Activated B cell treated with CpG ODN at 0.5 μM for 24 hours (primary cell): ENCODE measurements at regions of chr13 and their contacts with region 1.

Region 1: GRCh38 chr13:31909864-31910551 is 121.6 kb upstream of the FRY start:
- DNase-seq: no peak
- ATAC-seq: peak; percentile 45
- H3K4me3 Mint-ChIP-seq: no peak overlapping the region
- H3K27ac Mint-ChIP-seq: no peak overlapping the region
- H3K4me1 Mint-ChIP-seq: peaks cover 14% of the 10 kb centered on the region
- H3K27me3 Mint-ChIP-seq: peaks cover 4% of the 10 kb centered on the region
- CTCF ChIP-seq: peak; percentile 96

Region 2: DNA sequence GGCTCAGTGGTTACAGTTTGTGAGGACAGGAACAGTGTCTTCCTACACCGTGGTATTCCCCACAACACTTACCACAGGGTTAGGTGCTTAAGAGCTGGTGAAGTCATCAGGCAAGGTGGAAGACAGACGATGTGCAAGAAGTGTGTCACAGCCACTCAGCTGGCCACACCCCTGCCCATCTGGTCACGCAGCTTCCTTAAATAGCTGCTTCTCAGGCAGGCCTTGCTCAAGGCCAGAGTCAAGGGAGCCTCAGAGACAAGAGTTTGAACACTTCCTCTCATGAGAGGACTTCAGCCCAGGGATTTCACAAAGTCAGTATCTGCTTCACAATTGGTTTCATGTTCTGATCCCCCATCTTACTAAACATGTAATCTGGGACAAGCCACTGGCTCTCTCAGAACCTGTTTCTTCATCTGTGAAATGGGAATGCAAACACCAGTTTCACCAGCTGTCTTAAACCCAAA is 41.2 kb after region 1 on chr13:
- CTCF ChIA-PET with region 1: interaction called, 6 read pairs
- POLR2A ChIA-PET with region 1: no interaction called
- intact Hi-C with region 1: loop called (anchors 1 kb)
- DNase-seq: peak; percentile 34
- ATAC-seq: peak; percentile 87
- H3K4me3 Mint-ChIP-seq: no peak overlapping the region
- H3K27ac Mint-ChIP-seq: peak overlapping the region; percentile 86
- H3K4me1 Mint-ChIP-seq: peaks cover 21% of the 10 kb centered on the region
- H3K27me3 Mint-ChIP-seq: no peaks in the 10 kb centered on the region
- CTCF ChIP-seq: no peak

Region 3: GRCh38 chr13:32019612-32020233 is 109.7 kb after region 1 on chr13:
- CTCF ChIA-PET with region 1: interaction called, 12 read pairs
- POLR2A ChIA-PET with region 1: no interaction called
- intact Hi-C with region 1: loop called (anchors 1 kb)
- DNase-seq: no peak
- ATAC-seq: peak; percentile 85
- H3K4me3 Mint-ChIP-seq: no peak overlapping the region
- H3K27ac Mint-ChIP-seq: no peak overlapping the region
- H3K4me1 Mint-ChIP-seq: no peaks in the 10 kb centered on the region
- H3K27me3 Mint-ChIP-seq: no peaks in the 10 kb centered on the region
- CTCF ChIP-seq: no peak

Region 4: DNA sequence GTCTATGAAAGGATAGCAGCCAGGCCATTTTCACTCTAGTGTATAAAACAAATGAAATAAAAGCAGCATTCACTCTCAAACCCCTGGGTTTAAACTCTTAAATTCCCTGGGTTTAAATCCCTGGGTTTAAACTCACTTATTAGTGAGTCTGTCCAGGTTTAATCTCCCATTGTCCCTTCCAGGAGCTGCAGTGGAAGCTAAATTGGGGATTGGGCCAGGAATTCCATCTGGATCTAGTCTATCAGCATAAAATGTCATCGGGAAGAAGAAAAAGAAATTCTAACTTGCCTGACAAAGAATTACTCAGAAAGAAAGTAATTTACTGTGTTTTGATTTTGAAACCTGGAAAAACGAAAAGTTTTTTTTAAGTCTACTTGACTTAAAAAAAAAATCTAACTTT is 176.4 kb after region 1 on chr13:
- CTCF ChIA-PET with region 1: no interaction called
- POLR2A ChIA-PET with region 1: no interaction called
- intact Hi-C with region 1: no loop called
- DNase-seq: no peak
- ATAC-seq: no peak
- H3K4me3 Mint-ChIP-seq: no peak overlapping the region
- H3K27ac Mint-ChIP-seq: no peak overlapping the region
- H3K4me1 Mint-ChIP-seq: no peaks in the 10 kb centered on the region
- H3K27me3 Mint-ChIP-seq: no peaks in the 10 kb centered on the region
- CTCF ChIP-seq: no peak

Region 5: DNA sequence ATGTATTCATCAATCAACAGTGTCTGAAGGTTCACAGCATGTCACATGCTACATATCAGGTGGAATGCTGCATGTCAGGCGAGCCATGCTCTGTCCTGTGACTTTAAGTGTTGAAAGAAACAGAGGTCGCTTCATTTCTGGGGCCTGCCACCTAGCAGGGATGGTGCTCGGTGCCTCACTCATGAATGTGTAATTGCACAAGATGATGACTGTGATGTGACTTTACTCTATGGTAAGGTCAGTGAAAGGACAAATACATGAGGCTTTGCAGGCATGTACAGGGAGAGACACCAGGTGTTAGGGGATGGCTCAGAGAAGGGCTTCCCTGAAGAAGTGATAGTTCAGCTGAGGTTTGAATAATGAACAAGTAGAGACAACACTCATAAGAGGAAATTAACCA is 188.3 kb after region 1 on chr13:
- CTCF ChIA-PET with region 1: no interaction called
- POLR2A ChIA-PET with region 1: no interaction called
- intact Hi-C with region 1: no loop called
- DNase-seq: no peak
- ATAC-seq: no peak
- H3K4me3 Mint-ChIP-seq: no peak overlapping the region
- H3K27ac Mint-ChIP-seq: no peak overlapping the region
- H3K4me1 Mint-ChIP-seq: no peaks in the 10 kb centered on the region
- H3K27me3 Mint-ChIP-seq: no peaks in the 10 kb centered on the region
- CTCF ChIP-seq: no peak

Region 6: DNA sequence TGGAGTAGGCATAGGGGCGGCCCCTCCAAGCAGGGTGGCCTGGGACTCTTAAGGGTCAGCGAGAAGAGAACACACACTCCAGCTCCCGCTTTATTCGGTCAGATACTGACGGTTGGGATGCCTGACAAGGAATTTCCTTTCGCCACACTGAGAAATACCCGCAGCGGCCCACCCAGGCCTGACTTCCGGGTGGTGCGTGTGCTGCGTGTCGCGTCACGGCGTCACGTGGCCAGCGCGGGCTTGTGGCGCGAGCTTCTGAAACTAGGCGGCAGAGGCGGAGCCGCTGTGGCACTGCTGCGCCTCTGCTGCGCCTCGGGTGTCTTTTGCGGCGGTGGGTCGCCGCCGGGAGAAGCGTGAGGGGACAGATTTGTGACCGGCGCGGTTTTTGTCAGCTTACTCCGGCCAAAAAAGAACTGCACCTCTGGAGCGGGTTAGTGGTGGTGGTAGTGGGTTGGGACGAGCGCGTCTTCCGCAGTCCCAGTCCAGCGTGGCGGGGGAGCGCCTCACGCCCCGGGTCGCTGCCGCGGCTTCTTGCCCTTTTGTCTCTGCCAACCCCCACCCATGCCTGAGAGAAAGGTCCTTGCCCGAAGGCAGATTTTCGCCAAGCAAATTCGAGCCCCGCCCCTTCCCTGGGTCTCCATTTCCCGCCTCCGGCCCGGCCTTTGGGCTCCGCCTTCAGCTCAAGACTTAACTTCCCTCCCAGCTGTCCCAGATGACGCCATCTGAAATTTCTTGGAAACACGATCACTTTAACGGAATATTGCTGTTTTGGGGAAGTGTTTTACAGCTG is 405.4 kb after region 1 on chr13 and contains the starts of genes BRCA2 and ZAR1L:
- CTCF ChIA-PET with region 1: interaction called, 17 read pairs
- POLR2A ChIA-PET with region 1: interaction called, 6 read pairs
- intact Hi-C with region 1: loop called (anchors 1 kb)
- DNase-seq: peak; percentile 80
- ATAC-seq: peak; percentile 88
- H3K4me3 Mint-ChIP-seq: peak within 1 kb of the TSS; percentile 94
- H3K27ac Mint-ChIP-seq: peak within 1 kb of the TSS; percentile 100
- H3K4me1 Mint-ChIP-seq: peaks cover 14% of the 10 kb centered on the region
- H3K27me3 Mint-ChIP-seq: no peaks in the 10 kb centered on the region
- CTCF ChIP-seq: no peak
- total RNA-seq, gene BRCA2: 4.5 and 6.6 TPM in 2 replicates
- total RNA-seq, gene ZAR1L: not detected in 2 replicates

Region 7: GRCh38 chr13:32581177-32581786 is 671.3 kb after region 1 on chr13:
- CTCF ChIA-PET with region 1: interaction called, 18 read pairs
- POLR2A ChIA-PET with region 1: no interaction called
- intact Hi-C with region 1: loop called (anchors 1 kb)
- DNase-seq: no peak
- ATAC-seq: no peak
- H3K4me3 Mint-ChIP-seq: no peak overlapping the region
- H3K27ac Mint-ChIP-seq: no peak overlapping the region
- H3K4me1 Mint-ChIP-seq: peaks cover 9% of the 10 kb centered on the region
- H3K27me3 Mint-ChIP-seq: no peaks in the 10 kb centered on the region
- CTCF ChIP-seq: no peak